ENCODE measurements at regions of chr13 and their contacts with region 1.

Region 1: DNA sequence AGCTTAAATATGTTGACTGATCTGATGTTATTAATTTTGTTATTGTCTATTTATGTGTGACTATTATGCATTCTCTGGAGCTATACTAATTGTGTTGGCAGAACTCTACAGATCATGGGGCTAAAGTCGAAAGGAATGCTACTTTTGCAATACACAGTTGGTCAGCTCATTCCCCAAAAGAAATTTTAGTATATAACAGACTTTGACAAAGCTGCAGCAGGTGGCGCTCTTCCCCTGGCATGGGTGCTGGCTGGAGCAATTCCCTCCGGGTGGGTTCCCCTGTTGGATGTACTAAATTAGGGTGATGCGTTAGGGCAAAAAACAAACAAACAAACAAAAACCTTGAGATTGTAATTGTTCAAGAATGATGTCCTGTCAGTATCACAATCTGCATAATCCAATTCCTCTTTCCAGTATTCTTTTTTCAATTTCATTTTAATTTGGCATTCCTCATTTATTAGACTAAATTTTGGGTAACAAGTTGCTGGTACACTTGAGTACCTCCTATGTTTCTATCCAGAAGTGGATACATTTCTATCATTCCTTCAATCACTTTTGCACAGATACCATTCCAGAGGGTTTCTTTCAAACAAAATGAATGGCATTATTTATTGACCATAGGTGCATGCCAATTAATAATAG is 322.8 kb upstream of the EDNRB start:
- H3K4me3 ChIP-seq: no peak overlapping the region
- H3K27ac ChIP-seq: no peak overlapping the region
- H3K4me1 ChIP-seq: no peaks in the 10 kb centered on the region
- CTCF ChIP-seq: no peak

Region 2: GRCh38 chr13:78137404-78138142 is 103.8 kb before region 1 on chr13:
- CTCF ChIA-PET with region 1: interaction called, 12 read pairs
- POLR2A ChIA-PET with region 1: no interaction called
- H3K4me3 ChIP-seq: no peak overlapping the region; the same call in 1 of the 2 replicates
- H3K27ac ChIP-seq: no peak overlapping the region
- H3K4me1 ChIP-seq: no peaks in the 10 kb centered on the region
- CTCF ChIP-seq: peak; percentile 49